Activated CD4-positive, alpha-beta memory T cell treated with anti-CD3 and anti-CD28 coated beads for 36 hours (primary cell): ENCODE measurements at regions of chr6 and their contacts with region 1.

Region 1: DNA sequence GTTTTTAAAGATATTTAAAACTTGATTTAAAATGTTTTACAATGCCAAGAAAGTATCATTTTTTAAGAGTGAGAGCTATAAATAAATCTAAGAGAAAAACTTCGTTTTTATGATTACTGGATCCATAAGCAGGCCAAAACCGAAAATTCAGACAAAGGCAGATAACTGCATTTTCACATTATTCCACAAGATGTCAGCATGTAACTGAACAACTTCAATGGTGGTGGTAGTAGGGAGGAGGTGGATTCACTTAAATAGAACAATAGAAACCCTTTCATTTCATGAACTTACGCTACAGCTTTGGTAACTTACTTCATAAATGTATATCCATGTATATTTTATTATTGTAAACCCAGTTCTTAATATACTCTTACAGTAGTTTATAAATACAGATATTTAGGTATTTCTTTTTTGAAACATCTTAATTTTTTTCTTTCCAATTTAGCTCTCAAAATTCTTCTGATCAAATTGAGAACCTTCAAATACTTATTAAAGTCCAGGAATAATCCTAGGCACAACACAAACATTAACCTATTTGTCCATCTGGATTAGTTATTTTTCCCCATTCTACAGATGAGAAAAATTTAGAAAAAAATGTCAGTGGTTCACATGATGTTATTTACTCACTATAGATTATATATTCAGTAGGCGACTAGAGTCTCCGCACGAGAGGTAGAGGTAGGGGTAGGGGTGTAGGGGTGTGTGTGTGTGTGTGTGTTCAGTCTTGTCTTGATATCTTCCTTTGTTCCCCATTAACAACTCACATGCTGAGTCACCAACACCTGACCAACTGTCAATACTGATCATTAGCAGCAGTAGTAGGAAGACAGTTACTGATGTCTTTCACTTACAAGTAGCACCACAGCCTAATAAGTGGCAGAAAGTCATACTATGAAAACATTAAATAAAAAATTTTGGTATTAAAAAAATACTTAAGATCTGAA is 111.5 kb downstream of the ARHGAP18 start:
- DNase-seq: no peak
- H3K4me3 Mint-ChIP-seq: no peak overlapping the region
- H3K27ac Mint-ChIP-seq: no peak overlapping the region
- H3K4me1 Mint-ChIP-seq: no peaks in the 10 kb centered on the region
- H3K27me3 Mint-ChIP-seq: no peaks in the 10 kb centered on the region

Region 2: DNA sequence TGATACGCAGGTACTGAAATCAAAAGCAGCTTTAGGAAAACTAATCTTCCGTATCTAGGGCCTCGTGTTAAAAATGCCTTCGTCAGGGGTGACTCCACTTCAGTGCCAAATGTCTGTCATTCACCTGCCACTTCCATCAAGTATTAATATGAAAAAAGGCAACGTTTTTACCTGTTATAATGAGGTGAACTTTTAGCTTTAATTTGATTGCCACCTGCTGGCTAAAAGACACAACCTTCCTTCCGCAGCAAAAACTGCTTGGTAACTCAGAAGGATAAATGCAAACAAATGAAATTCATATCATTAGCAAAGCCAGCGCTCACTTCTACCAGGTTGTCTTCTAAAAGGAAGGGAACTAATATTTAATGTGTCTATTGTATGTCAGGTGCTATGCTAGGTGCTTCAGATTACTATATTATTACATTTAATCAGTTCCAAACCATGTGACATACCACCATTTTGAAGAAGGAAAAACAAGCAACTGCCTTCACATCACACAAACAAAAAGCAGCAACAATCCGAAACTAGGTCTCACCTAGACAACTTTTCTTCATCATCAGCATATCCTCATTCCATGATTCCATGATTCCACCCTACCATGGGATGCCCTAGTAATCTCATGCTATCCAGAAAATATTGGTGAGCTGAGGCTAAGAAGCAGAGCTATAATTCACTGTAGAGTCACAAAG is 132.1 kb after region 1 on chr6:
- CTCF ChIA-PET with region 1: interaction called, 125 read pairs
- POLR2A ChIA-PET with region 1: interaction called, 3 read pairs
- intact Hi-C with region 1: loop called (anchors 1 kb)
- DNase-seq: peak; percentile 19
- H3K4me3 Mint-ChIP-seq: no peak overlapping the region
- H3K27ac Mint-ChIP-seq: no peak overlapping the region
- H3K4me1 Mint-ChIP-seq: peaks cover 11% of the 10 kb centered on the region
- H3K27me3 Mint-ChIP-seq: no peaks in the 10 kb centered on the region

Region 3: DNA sequence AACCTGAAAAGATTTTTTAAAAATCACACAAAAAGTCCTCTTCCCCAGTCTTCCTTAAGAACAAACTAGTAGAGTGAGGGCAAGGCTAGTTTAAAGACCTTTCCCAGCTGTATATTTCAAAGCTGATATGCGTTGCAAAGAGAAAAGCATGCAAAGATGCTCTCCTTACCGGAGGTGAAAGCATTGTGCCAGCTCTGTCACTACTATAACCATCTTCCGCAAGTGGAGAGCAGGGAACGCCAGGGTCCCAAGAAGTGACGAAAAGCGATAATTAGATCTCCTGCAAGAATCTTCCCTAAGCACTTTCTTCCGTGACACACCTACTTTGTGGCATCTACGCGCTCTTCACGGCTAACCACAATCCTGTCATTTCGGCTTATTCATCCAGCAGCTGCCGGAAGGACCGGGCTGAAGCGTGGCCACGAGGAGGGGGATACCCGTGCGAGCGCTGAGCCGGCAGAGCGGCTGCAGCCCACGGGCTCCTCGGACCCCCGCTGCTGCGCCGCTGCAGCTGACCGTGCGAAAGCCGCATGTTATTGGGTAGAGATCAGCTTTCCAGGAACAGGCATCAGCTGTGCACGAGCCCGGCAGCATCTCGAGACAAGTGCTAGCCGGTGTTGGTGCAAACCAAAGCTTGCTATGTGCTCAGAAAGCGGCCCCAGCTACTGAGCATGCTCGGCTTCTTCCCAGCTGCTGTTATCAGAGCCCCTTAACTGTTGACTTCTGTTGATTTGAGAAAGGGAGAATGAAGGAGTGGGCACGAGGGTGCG is 168.6 kb after region 1 on chr6:
- CTCF ChIA-PET with region 1: interaction called, 18 read pairs
- POLR2A ChIA-PET with region 1: no interaction called
- intact Hi-C with region 1: no loop called
- DNase-seq: peak; percentile 84
- H3K4me3 Mint-ChIP-seq: peak overlapping the region; percentile 71
- H3K27ac Mint-ChIP-seq: no peak overlapping the region
- H3K4me1 Mint-ChIP-seq: peaks cover 14% of the 10 kb centered on the region
- H3K27me3 Mint-ChIP-seq: peaks cover 15% of the 10 kb centered on the region

Region 4: GRCh38 chr6:129774697-129775447 is 176.4 kb after region 1 on chr6:
- CTCF ChIA-PET with region 1: interaction called, 26 read pairs
- POLR2A ChIA-PET with region 1: no interaction called
- intact Hi-C with region 1: loop called (anchors 1 kb)
- DNase-seq: peak; percentile 64
- H3K4me3 Mint-ChIP-seq: no peak overlapping the region
- H3K27ac Mint-ChIP-seq: no peak overlapping the region
- H3K4me1 Mint-ChIP-seq: no peaks in the 10 kb centered on the region
- H3K27me3 Mint-ChIP-seq: no peaks in the 10 kb centered on the region

Region 5: GRCh38 chr6:129936329-129937165 is 338.0 kb after region 1 on chr6:
- CTCF ChIA-PET with region 1: interaction called, 8 read pairs
- POLR2A ChIA-PET with region 1: no interaction called
- intact Hi-C with region 1: loop called (anchors 2 kb)
- DNase-seq: peak; percentile 44
- H3K4me3 Mint-ChIP-seq: no peak overlapping the region
- H3K27ac Mint-ChIP-seq: no peak overlapping the region
- H3K4me1 Mint-ChIP-seq: no peaks in the 10 kb centered on the region
- H3K27me3 Mint-ChIP-seq: peaks cover 12% of the 10 kb centered on the region